ENCODE measurements at regions of chr21 and their contacts with region 1.

Region 1: GRCh38 chr21:45724345-45724961 is 80.9 kb downstream of the PCBP3 start:
- DNase-seq: peak; percentile 29 to 39
- ATAC-seq: peak; percentile 52 to 90 (median 78)
- H3K4me3 ChIP-seq: peak overlapping the region in 4 of 10 donors; percentile 10 to 31 (median 26)
- H3K27ac ChIP-seq: no peak overlapping the region
- H3K4me1 ChIP-seq: peaks cover 0 to 9% (median 0%) of the 10 kb centered on the region in 9 donors
- H3K27me3 ChIP-seq: peaks cover 0 to 6% (median 0%) of the 10 kb centered on the region in 7 donors
- CTCF ChIP-seq: no peak

Region 2: DNA sequence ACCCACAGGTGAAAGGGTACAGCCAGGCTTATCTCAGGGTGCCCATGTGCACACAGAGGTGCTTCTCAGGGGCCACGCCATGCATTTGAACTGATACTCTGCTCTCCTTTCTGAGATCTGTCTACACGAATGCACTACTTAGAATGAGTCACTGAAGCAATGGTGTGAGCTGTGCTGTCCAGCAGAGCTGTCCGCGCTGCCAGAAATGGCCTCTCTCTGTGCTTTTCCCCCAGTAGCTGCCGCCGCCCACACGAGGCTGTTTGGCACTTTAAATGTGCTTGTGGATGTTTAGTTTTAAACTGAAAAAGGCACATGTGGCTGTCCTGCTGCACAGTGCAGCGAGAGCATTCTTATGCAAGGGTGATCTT is 170.0 kb after region 1 on chr21:
- intact Hi-C with region 1: loop called in 1 of 10 experiments (anchors 10 kb)
- DNase-seq: peak; percentile 45 to 46
- ATAC-seq: peak; percentile 57 to 79 (median 72)
- H3K4me3 ChIP-seq: no peak overlapping the region
- H3K27ac ChIP-seq: peak overlapping the region in 5 of 10 donors; percentile 35 to 73 (median 43)
- H3K4me1 ChIP-seq: peaks cover 0 to 30% (median 19%) of the 10 kb centered on the region in 9 donors
- H3K27me3 ChIP-seq: peaks cover 0 to 6% (median 0%) of the 10 kb centered on the region in 7 donors
- CTCF ChIP-seq: no peak

Measured in heart right ventricle (tissue), 16 donors.